Activated CD8-positive, alpha-beta T cell treated with anti-CD3 and anti-CD28 coated beads, Interleukin-2, amount 10 ng/mL, durations not matched to agents 7 days and 5 days (primary cell): ENCODE measurements at regions of chr4 and their contacts with region 1.

Region 1: GRCh38 chr4:89024051-89024675 is 32.8 kb downstream of the FAM13A start:
- DNase-seq: peak; percentile 70
- ATAC-seq: peak; percentile 94
- H3K4me3 Mint-ChIP-seq: no peak overlapping the region
- H3K27ac Mint-ChIP-seq: no peak overlapping the region
- H3K4me1 Mint-ChIP-seq: no peaks in the 10 kb centered on the region
- H3K27me3 Mint-ChIP-seq: no peaks in the 10 kb centered on the region

Region 2: GRCh38 chr4:88523325-88524129 is 500.6 kb before region 1 on chr4 and contains the start of gene PYURF:
- CTCF ChIA-PET with region 1: interaction called, 31 read pairs
- POLR2A ChIA-PET with region 1: no interaction called
- DNase-seq: peak; percentile 76
- ATAC-seq: peak; percentile 86
- H3K4me3 Mint-ChIP-seq: peak within 1 kb of the TSS; percentile 95
- H3K27ac Mint-ChIP-seq: peak within 1 kb of the TSS; percentile 88
- H3K4me1 Mint-ChIP-seq: peaks cover 47% of the 10 kb centered on the region
- H3K27me3 Mint-ChIP-seq: no peaks in the 10 kb centered on the region
- total RNA-seq, gene PYURF: 43.7 to 48.7 TPM

Region 3: GRCh38 chr4:88528861-88529260 is 495.3 kb before region 1 on chr4:
- CTCF ChIA-PET with region 1: interaction called, 31 read pairs
- POLR2A ChIA-PET with region 1: no interaction called
- DNase-seq: no peak
- ATAC-seq: no peak
- H3K4me3 Mint-ChIP-seq: no peak overlapping the region
- H3K27ac Mint-ChIP-seq: no peak overlapping the region
- H3K4me1 Mint-ChIP-seq: peaks cover 28% of the 10 kb centered on the region
- H3K27me3 Mint-ChIP-seq: no peaks in the 10 kb centered on the region

Region 4: GRCh38 chr4:88818631-88819470 is 205.3 kb before region 1 on chr4:
- CTCF ChIA-PET with region 1: interaction called, 173 read pairs
- POLR2A ChIA-PET with region 1: no interaction called
- DNase-seq: peak; percentile 55
- ATAC-seq: no peak
- H3K4me3 Mint-ChIP-seq: no peak overlapping the region
- H3K27ac Mint-ChIP-seq: no peak overlapping the region
- H3K4me1 Mint-ChIP-seq: peaks cover 23% of the 10 kb centered on the region
- H3K27me3 Mint-ChIP-seq: peaks cover 10% of the 10 kb centered on the region

Region 5: DNA sequence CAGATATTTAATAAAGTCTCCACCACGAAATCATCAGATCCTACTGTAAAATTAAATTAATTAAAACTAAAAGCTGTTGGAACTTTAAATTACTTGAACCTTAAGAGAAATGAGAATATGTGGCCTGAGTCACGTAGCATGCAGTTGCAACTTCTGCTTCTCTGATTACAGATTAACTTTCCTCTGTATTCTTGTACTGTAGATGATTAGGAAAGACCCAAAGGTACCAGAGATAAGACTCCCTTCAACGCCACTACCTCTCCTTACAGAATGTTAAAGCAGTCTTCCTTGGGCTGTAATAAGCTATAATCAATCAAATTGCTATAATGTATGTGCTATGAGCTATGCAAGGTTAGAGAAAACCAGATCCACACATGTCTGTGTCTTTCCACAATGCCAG is 15.0 kb before region 1 on chr4:
- CTCF ChIA-PET with region 1: no interaction called
- POLR2A ChIA-PET with region 1: no interaction called
- DNase-seq: no peak
- ATAC-seq: no peak
- H3K4me3 Mint-ChIP-seq: no peak overlapping the region
- H3K27ac Mint-ChIP-seq: no peak overlapping the region
- H3K4me1 Mint-ChIP-seq: no peaks in the 10 kb centered on the region
- H3K27me3 Mint-ChIP-seq: peaks cover 3% of the 10 kb centered on the region